IMR-90 (cell line): ENCODE measurements at regions of chr5 and their contacts with region 1.

Region 1: DNA sequence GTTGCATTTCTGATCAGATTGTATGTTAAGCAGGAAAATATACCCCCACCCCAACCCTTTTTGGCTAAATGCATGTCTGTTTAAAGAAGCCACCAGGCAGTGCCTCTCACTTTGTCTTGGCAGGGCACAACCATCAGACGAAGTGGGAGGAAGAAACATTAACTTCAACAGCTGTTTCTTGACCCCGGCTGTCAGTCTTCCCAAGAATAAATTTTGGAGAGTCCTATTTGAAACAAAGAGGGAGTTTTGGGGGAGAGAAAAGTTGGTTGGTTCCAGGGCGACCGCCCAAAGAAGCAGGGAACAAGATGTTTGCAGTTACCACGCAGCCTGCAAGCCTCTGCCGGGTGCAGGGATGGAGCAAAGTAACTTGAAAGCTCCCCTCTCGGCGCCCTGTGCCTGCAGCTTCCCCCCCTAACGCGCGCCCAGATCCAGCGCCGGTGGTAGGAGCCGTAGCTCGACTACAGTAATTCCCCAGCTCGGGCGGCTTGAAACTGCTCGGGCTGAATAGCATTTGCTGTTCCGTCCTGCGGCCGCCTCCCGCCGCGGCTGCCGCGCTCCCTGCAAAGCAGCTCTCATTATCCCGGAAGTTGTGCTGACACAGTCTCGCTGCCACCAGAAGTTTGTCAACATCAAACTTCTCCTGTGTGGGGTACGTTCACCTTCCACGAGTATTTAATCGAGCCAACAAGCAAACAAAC is 100.7 kb upstream of the SSBP2 start:
- DNase-seq: peak; percentile 94
- ATAC-seq: peak; percentile 93
- H3K4me3 ChIP-seq: peak overlapping the region; percentile 31
- H3K27ac ChIP-seq: peak overlapping the region; percentile 94
- H3K4me1 ChIP-seq: peaks cover 19% of the 10 kb centered on the region
- H3K27me3 ChIP-seq: no peaks in the 10 kb centered on the region
- CTCF ChIP-seq: 0 out of 2 replicates have a peak, but pooled peaks have one; percentile 1
- POLR2A ChIP-seq: no peak
- RAD21 ChIP-seq: peak; percentile 60

Region 2: DNA sequence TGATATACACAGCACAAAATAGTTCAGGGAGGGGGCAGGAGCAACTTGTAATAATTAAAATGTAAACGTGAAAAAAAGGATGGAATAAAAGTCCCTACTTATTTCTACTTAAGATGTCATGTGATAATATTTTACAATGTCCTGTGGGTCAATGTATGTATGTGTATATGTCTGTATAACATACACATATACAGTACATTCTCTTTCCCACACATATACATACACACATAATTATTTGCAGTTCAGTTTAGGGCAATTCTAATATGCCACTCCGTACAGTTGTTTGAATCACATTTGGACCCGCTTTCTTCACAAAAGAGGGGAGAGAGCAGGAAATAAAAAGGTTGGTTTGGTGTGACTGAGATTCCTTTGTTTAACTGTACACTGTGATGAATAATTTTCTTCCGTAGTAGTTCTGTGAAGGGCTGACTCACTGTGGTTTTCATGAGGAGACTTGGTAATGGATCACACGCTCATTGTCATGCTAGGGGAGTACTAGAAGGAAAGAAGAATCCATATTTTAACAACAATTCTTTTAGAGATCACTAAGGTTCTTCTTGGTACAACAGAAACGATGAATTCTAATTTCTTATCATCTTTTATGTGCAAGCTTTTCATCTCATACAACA is 431.5 kb before region 1 on chr5:
- CTCF ChIA-PET with region 1: no interaction called
- POLR2A ChIA-PET with region 1: no interaction called
- dilution Hi-C with region 1: no loop called
- in situ Hi-C with region 1: loop called (anchors 10 kb)
- intact Hi-C with region 1: loop called (anchors 5 kb)
- DNase-seq: peak; percentile 96
- ATAC-seq: peak; percentile 67
- H3K4me3 ChIP-seq: no peak overlapping the region
- H3K27ac ChIP-seq: no peak overlapping the region; the same call in 1 of the 2 replicates
- H3K4me1 ChIP-seq: peaks cover 14% of the 10 kb centered on the region
- H3K27me3 ChIP-seq: no peaks in the 10 kb centered on the region
- CTCF ChIP-seq: no peak
- POLR2A ChIP-seq: peak; percentile 33
- RAD21 ChIP-seq: no peak

Region 3: DNA sequence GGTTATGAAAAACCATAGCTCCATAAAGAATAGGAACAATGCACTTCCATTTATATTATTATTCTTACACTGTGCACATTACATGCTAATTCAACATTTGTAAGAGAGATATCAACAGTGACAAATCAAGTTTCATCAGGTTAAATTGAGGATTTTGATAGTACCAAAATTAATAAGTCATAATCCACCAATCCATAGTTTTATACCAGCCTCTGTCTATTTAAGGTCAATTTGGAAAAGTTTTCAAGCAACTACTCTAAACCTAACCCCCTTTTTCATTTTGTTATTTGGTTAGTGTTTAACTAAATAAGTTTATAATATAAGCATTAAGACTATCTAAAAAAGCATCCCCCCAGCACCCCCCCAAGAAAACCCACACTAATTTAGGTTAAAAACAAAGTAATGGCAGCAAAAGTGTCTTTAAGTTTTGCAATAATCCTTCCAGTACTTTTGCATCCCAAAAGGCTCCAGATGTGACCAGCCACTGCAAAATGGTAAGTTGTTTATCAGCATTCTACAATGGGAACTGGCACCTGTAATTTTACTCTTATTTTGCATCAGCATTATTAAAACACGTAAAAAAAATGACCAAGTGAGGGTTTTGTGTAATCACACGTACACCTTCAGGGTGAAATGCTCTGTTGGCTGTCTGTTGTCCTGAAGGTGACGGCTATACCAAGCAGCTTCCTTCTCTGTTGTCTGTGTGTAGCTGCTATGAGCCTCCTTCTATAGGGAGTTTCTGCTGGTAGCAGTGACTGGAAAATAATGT is 64.0 kb before region 1 on chr5:
- CTCF ChIA-PET with region 1: no interaction called
- POLR2A ChIA-PET with region 1: no interaction called
- dilution Hi-C with region 1: no loop called
- in situ Hi-C with region 1: loop called (anchors 5 kb)
- intact Hi-C with region 1: loop called (anchors 1 kb)
- DNase-seq: peak; percentile 80
- ATAC-seq: peak; percentile 71
- H3K4me3 ChIP-seq: no peak overlapping the region
- H3K27ac ChIP-seq: peak overlapping the region; percentile 55; the same call in 1 of the 2 replicates
- H3K4me1 ChIP-seq: peaks cover 12% of the 10 kb centered on the region
- H3K27me3 ChIP-seq: no peaks in the 10 kb centered on the region
- CTCF ChIP-seq: no peak
- POLR2A ChIP-seq: no peak
- RAD21 ChIP-seq: no peak

Region 4: DNA sequence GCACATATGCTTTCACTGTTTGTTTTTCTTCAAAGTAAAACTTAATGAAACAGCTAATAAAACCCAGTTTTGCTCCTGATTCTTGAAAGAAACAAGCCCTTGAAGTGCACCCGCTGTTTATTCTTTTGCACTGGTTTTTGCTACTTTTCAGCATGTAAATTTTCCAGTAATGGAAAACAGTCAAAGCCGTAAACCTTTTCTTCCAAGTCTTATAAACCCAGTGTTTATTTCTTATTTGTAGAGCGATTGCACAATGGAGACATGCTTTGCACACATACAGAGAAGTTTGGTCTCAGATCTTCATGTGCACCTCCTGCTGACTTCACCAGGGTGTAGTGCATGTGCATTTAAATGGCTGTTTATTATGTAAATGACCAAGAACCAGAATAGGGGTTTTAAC is 172.0 kb after region 1 on chr5:
- CTCF ChIA-PET with region 1: no interaction called
- POLR2A ChIA-PET with region 1: no interaction called
- dilution Hi-C with region 1: no loop called
- in situ Hi-C with region 1: no loop called
- intact Hi-C with region 1: no loop called
- DNase-seq: peak; percentile 44
- ATAC-seq: peak; percentile 56; the same call in 1 of the 2 replicates
- H3K4me3 ChIP-seq: no peak overlapping the region
- H3K27ac ChIP-seq: no peak overlapping the region
- H3K4me1 ChIP-seq: no peaks in the 10 kb centered on the region
- H3K27me3 ChIP-seq: no peaks in the 10 kb centered on the region
- CTCF ChIP-seq: no peak
- POLR2A ChIP-seq: no peak
- RAD21 ChIP-seq: no peak

Region 5: DNA sequence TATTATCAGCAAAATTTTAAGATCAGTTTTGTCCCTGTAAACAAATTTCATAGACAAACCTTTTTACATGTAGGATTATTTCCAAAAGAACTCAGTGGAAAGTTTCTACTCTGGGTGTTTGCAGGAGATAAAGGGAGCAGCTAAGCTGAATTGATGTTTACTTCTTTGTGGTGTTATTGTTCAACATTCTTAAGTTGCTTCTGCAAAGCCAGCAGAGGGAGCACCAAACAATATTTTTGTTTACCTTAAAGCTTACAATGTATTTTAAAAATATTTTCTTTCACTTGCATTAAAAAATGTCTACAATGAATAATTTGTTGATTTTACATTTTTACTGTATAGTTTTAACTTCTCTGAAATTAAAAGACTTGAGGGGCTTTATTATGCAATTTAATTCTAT is 255.6 kb after region 1 on chr5:
- CTCF ChIA-PET with region 1: no interaction called
- POLR2A ChIA-PET with region 1: no interaction called
- dilution Hi-C with region 1: no loop called
- in situ Hi-C with region 1: no loop called
- intact Hi-C with region 1: no loop called
- DNase-seq: peak; percentile 19
- ATAC-seq: peak; percentile 64
- H3K4me3 ChIP-seq: no peak overlapping the region
- H3K27ac ChIP-seq: no peak overlapping the region
- H3K4me1 ChIP-seq: no peaks in the 10 kb centered on the region
- H3K27me3 ChIP-seq: no peaks in the 10 kb centered on the region
- CTCF ChIP-seq: peak; percentile 41
- POLR2A ChIP-seq: no peak
- RAD21 ChIP-seq: 0 out of 2 replicates have a peak, but pooled peaks have one; percentile 19

Region 6: GRCh38 chr5:82165740-82166530 is 314.3 kb after region 1 on chr5:
- CTCF ChIA-PET with region 1: interaction called, 7 read pairs
- POLR2A ChIA-PET with region 1: no interaction called
- dilution Hi-C with region 1: no loop called
- in situ Hi-C with region 1: loop called (anchors 10 kb)
- intact Hi-C with region 1: loop called (anchors 1 kb)
- DNase-seq: peak; percentile 95
- ATAC-seq: peak; percentile 79
- H3K4me3 ChIP-seq: no peak overlapping the region
- H3K27ac ChIP-seq: no peak overlapping the region
- H3K4me1 ChIP-seq: peaks cover 5% of the 10 kb centered on the region
- H3K27me3 ChIP-seq: no peaks in the 10 kb centered on the region
- CTCF ChIP-seq: peak; percentile 94
- POLR2A ChIP-seq: peak; percentile 36; the same call in 1 of the 2 replicates
- RAD21 ChIP-seq: peak; percentile 94